CD4-positive, alpha-beta T cell (primary cell): ENCODE measurements at regions of chr10 and their contacts with region 1.

Region 1: DNA sequence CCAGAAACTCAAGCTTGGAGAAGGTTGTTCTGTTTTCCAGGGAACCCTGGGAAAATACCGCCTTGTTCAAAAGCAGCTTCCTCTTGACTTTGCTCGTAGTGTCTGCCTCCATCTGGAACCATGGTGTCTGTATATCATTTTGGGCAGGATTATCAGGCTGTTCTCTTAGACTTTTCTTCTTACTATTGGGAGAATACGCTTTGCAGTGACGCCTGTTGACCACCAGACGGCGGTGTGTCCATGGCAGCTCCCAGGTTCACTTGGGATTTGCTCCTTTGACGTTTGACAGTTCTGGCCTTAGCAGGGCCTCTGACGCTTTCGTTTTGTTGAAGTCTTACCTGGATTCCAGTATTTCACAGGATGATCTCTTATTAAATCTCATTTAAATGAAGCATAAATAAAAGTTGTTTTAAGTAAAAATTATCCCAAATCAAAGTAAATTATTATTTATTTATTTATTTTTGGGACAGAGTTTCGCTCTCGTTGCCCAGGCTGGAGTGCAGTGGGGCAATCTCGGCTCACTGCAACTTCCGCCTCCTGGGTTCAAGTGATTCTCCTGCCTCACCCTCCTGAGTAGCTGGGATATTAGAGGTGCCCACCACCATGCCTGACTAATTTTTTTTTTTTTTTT is 41.8 kb upstream of the GJD4 start:
- DNase-seq: peak in 12 of 14 experiments; percentile 9 to 71 (median 24)
- ATAC-seq: peak; percentile 55
- H3K4me3 ChIP-seq: no peak overlapping the region
- H3K4me3 Mint-ChIP-seq: no peak overlapping the region
- H3K27ac ChIP-seq: no peak overlapping the region
- H3K27ac Mint-ChIP-seq: no peak overlapping the region
- H3K4me1 ChIP-seq: no peaks in the 10 kb centered on the region
- H3K4me1 Mint-ChIP-seq: peaks cover 11% of the 10 kb centered on the region
- H3K27me3 ChIP-seq: no peaks in the 10 kb centered on the region
- H3K27me3 Mint-ChIP-seq: no peaks in the 10 kb centered on the region
- CTCF ChIP-seq: peak; percentile 93

Region 2: DNA sequence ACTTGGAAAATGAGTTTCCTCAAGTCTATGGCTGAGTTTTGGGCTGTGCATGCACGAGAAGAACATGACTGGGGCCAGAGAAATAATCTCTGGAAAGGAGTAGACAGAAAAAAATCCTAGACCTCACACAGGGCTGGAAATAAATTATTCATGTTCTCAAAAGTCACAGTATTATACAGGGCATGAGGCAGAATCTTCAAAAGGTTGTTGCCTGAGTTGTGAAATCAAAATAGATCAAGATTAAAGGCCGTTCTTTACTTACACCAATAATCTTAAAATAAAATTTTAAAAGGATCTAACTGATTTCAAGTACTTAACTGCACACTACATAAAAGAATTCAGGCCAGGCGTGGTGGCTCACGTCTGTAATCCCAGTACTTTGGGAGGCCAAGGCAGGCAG is 450.8 kb before region 1 on chr10:
- CTCF ChIA-PET with region 1: interaction called, 4 read pairs
- POLR2A ChIA-PET with region 1: no interaction called
- intact Hi-C with region 1: loop called in 1 of 2 experiments (anchors 10 kb)
- DNase-seq: no peak
- ATAC-seq: no peak
- H3K4me3 ChIP-seq: no peak overlapping the region
- H3K4me3 Mint-ChIP-seq: no peak overlapping the region
- H3K27ac ChIP-seq: no peak overlapping the region
- H3K27ac Mint-ChIP-seq: no peak overlapping the region
- H3K4me1 ChIP-seq: no peaks in the 10 kb centered on the region
- H3K4me1 Mint-ChIP-seq: no peaks in the 10 kb centered on the region
- H3K27me3 ChIP-seq: no peaks in the 10 kb centered on the region
- H3K27me3 Mint-ChIP-seq: no peaks in the 10 kb centered on the region
- CTCF ChIP-seq: no peak

Region 3: DNA sequence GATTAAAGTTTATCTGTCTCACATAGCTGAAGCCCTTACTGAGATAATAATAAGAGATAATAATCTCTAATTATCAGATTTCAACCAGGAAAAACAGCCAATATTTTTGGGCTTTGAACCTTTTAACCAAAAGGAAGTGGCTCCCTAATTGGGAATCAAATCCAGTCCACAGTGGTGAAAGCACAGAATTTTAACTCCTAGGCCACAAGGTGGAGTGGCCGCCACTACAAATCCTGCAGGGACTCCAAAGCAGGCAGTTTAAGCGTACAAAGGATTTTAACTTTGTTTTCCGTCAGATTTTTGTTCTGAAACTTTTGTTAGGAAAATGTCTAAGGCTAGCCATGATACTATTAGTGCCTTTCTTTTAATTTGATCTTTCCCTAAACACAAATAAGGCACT is 326.6 kb before region 1 on chr10:
- CTCF ChIA-PET with region 1: no interaction called
- POLR2A ChIA-PET with region 1: no interaction called
- intact Hi-C with region 1: loop called in 1 of 2 experiments (anchors 5 kb)
- DNase-seq: no peak
- ATAC-seq: no peak
- H3K4me3 ChIP-seq: no peak overlapping the region
- H3K4me3 Mint-ChIP-seq: no peak overlapping the region
- H3K27ac ChIP-seq: no peak overlapping the region
- H3K27ac Mint-ChIP-seq: no peak overlapping the region
- H3K4me1 ChIP-seq: peaks cover 2% of the 10 kb centered on the region
- H3K4me1 Mint-ChIP-seq: no peaks in the 10 kb centered on the region
- H3K27me3 ChIP-seq: no peaks in the 10 kb centered on the region
- H3K27me3 Mint-ChIP-seq: no peaks in the 10 kb centered on the region
- CTCF ChIP-seq: no peak

Region 4: DNA sequence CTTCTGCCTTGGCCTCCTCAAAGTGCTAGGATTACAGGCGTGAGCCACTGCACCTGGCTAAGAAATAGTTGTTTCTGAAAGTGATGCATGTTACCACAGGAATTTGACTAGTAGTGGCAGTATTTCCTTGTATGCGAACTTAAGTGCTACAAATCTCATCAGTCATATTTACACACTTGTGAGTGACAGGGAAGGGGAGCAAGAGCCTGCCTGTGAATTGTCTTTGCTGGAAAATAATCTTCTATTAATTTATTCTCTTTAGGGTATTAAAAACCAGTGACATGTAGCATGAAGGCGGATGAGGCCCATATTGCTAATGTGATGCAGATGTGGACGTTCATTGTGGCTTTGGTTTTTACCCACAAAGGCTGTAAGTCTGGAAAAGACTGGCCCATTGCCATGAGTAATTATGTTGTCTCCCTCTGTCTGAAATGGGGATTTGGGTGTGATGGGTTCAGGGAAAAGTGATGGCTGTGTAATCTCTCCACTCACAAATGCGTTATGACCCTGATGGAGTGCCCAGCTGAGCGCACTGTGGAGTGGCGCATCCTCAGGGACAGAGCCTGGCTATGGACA is 129.4 kb before region 1 on chr10:
- CTCF ChIA-PET with region 1: no interaction called
- POLR2A ChIA-PET with region 1: no interaction called
- intact Hi-C with region 1: no loop called
- DNase-seq: no peak
- ATAC-seq: no peak
- H3K4me3 ChIP-seq: no peak overlapping the region
- H3K4me3 Mint-ChIP-seq: no peak overlapping the region
- H3K27ac ChIP-seq: no peak overlapping the region
- H3K27ac Mint-ChIP-seq: peak overlapping the region; percentile 58
- H3K4me1 ChIP-seq: no peaks in the 10 kb centered on the region
- H3K4me1 Mint-ChIP-seq: peaks cover 46% of the 10 kb centered on the region
- H3K27me3 ChIP-seq: no peaks in the 10 kb centered on the region
- H3K27me3 Mint-ChIP-seq: no peaks in the 10 kb centered on the region
- CTCF ChIP-seq: no peak

Region 5: GRCh38 chr10:35626971-35627507 is 63.7 kb after region 1 on chr10:
- CTCF ChIA-PET with region 1: no interaction called
- POLR2A ChIA-PET with region 1: no interaction called
- intact Hi-C with region 1: loop called in 1 of 2 experiments (anchors 10 kb)
- DNase-seq: no peak
- ATAC-seq: no peak
- H3K4me3 ChIP-seq: no peak overlapping the region
- H3K4me3 Mint-ChIP-seq: no peak overlapping the region
- H3K27ac ChIP-seq: no peak overlapping the region
- H3K27ac Mint-ChIP-seq: no peak overlapping the region
- H3K4me1 ChIP-seq: no peaks in the 10 kb centered on the region
- H3K4me1 Mint-ChIP-seq: no peaks in the 10 kb centered on the region
- H3K27me3 ChIP-seq: peaks cover 3 to 19% of the 10 kb centered on the region in 2 experiments
- H3K27me3 Mint-ChIP-seq: peaks cover 42% of the 10 kb centered on the region
- CTCF ChIP-seq: no peak